Activated CD8-positive, alpha-beta T cell treated with anti-CD3 and anti-CD28 coated beads for 36 hours (primary cell): ENCODE measurements at regions of chr6 and their contacts with region 1.

Region 1: GRCh38 chr6:33425668-33426577 is 6.1 kb downstream of the SYNGAP1 start:
- DNase-seq: peak; percentile 93
- ATAC-seq: peak; percentile 65
- H3K4me3 Mint-ChIP-seq: peak overlapping the region; percentile 84
- H3K27ac Mint-ChIP-seq: peak overlapping the region; percentile 90
- H3K4me1 Mint-ChIP-seq: peaks cover 63% of the 10 kb centered on the region
- H3K27me3 Mint-ChIP-seq: no peaks in the 10 kb centered on the region
- CTCF ChIP-seq: peak; percentile 34

Region 2: DNA sequence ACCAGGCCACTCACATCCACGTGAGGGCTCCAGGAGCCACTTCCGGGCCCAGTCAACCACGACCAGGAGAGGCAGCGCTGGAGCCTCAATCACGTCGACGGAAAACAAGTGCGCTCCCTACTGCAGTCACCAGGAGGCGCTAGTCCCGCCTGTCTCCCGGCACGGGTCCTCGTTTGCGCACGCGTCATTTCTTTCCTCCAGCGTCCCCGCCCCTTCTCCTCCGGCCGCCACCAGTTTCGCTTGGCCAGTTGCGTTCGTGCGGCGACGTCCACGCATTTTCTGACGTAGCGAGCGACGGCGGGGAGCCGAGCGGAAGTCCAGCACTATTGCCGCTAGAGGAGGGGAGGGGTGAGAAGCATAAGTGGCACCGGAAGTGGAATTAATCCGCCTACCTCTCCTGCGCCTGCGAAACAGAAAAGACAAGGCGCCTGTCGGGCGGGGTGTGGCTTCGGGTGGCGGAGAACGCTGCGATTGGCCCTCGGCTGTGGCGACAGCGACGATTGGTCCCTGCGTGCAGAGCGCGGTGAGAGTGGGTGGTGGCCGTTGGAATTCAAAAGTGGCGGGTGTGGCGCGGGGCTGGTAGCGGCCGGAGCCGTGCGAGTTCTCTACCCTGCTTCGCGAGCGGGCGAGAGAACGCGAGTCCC is 34.5 kb before region 1 on chr6 and contains the start of gene KIFC1:
- CTCF ChIA-PET with region 1: interaction called, 11 read pairs
- POLR2A ChIA-PET with region 1: interaction called, 6 read pairs
- intact Hi-C with region 1: loop called (anchors 5 kb)
- DNase-seq: peak; percentile 99
- ATAC-seq: peak; percentile 91
- H3K4me3 Mint-ChIP-seq: peak within 1 kb of the TSS; percentile 89
- H3K27ac Mint-ChIP-seq: peak within 1 kb of the TSS; percentile 93
- H3K4me1 Mint-ChIP-seq: peaks cover 36% of the 10 kb centered on the region
- H3K27me3 Mint-ChIP-seq: no peaks in the 10 kb centered on the region
- CTCF ChIP-seq: peak; percentile 96
- total RNA-seq, gene KIFC1: 93.4 to 96.0 TPM

Region 3: DNA sequence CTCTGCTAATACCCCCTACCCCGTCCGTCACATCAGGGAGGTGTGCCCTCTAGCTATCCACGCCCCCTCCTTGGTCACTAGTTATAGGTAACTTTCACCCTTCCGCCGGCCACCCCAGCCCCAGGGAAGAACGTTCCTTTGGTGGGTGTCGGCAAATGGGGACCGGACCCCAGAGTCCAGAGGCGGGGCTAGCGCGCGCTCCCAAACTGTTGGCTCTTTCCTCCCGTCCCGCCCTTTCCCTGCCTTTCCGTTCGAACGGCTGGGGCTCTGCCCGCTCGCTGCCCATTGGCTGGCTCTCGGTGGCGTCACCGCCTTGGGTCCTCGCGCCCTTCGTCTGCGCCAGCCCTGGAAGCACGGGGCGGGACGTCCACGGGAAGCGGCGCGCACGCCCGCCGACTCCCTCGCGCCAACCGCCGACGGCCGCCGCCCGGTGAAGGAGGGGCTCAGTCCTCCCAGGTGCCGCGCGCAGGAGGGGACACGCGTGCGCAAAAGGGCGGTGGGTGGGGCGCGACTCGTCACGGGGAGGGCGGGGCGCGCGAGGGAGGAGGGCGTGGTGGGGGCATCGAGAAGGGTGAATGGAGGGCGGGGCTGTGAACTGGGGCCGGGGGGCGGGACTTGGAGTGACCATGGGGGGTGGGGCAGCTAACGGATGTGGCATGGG is 15.7 kb before region 1 on chr6:
- CTCF ChIA-PET with region 1: interaction called, 9 read pairs
- POLR2A ChIA-PET with region 1: interaction called, 46 read pairs
- intact Hi-C with region 1: no loop called
- DNase-seq: peak; percentile 97
- ATAC-seq: peak; percentile 81
- H3K4me3 Mint-ChIP-seq: peak overlapping the region; percentile 87
- H3K27ac Mint-ChIP-seq: peak overlapping the region; percentile 90
- H3K4me1 Mint-ChIP-seq: peaks cover 46% of the 10 kb centered on the region
- H3K27me3 Mint-ChIP-seq: no peaks in the 10 kb centered on the region
- CTCF ChIP-seq: no peak

Region 4: DNA sequence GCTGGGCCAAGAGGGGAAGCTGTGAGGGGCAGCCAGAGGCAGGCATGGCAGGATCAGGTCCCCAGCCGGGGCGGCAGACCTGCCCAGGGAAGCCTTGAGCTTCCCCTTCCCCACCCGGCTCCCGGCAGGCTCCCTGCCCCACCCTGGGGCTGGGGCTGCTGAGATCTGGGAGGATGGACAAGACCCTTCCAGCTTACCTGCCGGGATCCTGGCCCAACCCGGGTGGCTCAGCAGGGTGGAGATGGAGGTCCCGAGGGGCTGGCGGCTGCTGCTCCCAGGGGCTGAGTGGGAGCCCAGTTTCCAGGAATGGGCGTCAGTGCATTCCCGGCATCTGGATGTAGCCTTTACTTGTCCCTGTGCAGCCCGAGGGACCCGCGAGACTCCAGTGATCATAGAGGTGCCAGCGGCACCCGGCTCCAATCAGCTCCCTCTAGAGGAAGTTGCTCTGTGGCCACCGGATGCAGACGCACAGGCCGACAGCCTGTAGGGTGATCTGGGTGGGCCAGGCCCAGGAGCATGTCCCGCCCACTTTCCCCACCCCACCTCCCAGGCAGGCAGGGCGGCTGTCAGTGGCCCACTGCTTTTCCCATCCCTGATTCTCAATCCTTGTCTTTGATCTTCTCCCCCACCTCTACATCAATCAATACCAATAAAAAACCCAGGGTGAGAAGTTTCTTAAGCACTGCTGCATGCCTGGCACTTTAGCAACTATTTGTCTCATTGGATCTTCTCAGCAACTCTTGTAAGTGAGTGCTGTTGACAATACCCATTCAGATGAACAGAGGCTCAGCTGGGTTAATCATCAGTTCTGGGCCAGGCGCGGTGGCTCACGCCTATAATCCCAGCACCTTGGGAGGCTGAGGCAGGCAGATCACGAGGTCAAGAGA is 154.1 kb after region 1 on chr6 and contains the start of gene BAK1:
- CTCF ChIA-PET with region 1: interaction called, 4 read pairs
- POLR2A ChIA-PET with region 1: interaction called, 6 read pairs
- intact Hi-C with region 1: loop called (anchors 10 kb)
- DNase-seq: peak; percentile 93
- ATAC-seq: peak; percentile 97
- H3K4me3 Mint-ChIP-seq: peak within 1 kb of the TSS; percentile 83
- H3K27ac Mint-ChIP-seq: peak within 1 kb of the TSS; percentile 92
- H3K4me1 Mint-ChIP-seq: peaks cover 26% of the 10 kb centered on the region
- H3K27me3 Mint-ChIP-seq: no peaks in the 10 kb centered on the region
- CTCF ChIP-seq: peak; percentile 71
- total RNA-seq, gene BAK1: 33.8 to 34.3 TPM